Heart left ventricle (tissue), 16 donors: ENCODE measurements at regions of chr6 and their contacts with region 1.

Region 1: GRCh38 chr6:33008944-33009861 is at the start of gene HLA-DOA:
- DNase-seq: peak in 1 of 5 donors; percentile 22
- ATAC-seq: peak; percentile 26 to 74 (median 67)
- H3K4me3 ChIP-seq: peak within 1 kb of the TSS in 9 of 12 donors; percentile 12 to 67 (median 44)
- H3K27ac ChIP-seq: peak within 1 kb of the TSS in 3 of 12 donors; percentile 7 to 83 (median 71)
- H3K4me1 ChIP-seq: peaks cover 0 to 15% (median 0%) of the 10 kb centered on the region in 12 donors
- H3K27me3 ChIP-seq: peaks cover 0 to 21% (median 4%) of the 10 kb centered on the region in 9 donors
- CTCF ChIP-seq: no peak
- POLR2A ChIP-seq: no peak
- total RNA-seq, gene HLA-DOA: 0.44 to 32.4 (median 1.5) TPM

Region 2: DNA sequence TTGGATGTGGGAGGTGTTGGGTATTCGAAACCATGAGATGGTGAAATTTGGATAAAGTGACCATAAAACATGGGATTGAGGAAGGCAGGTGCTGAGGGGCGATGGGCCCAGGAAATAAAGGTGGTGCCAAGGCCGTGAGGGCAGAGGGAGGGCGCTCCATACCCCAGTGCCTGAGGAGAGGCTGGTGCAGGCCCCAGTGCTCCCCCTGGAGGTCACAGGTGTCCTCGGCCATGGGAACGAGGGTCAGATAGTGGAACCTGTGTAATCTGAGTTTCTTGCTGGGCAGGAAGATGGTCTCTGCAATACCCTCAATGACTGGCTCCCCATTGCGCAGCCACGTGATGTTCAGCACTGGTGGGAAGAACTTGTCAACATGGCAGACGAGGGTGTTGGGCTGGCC is 82.8 kb after region 1 on chr6:
- intact Hi-C with region 1: loop called in 3 of 10 experiments (anchors 2 to 5 kb)
- DNase-seq: peak in 1 of 5 donors; percentile 75
- ATAC-seq: peak in 3 of 4 donors; percentile 20 to 54 (median 54)
- H3K4me3 ChIP-seq: no peak overlapping the region
- H3K27ac ChIP-seq: no peak overlapping the region
- H3K4me1 ChIP-seq: peaks cover 0 to 6% (median 0%) of the 10 kb centered on the region in 12 donors
- H3K27me3 ChIP-seq: peaks cover 0 to 11% (median 0%) of the 10 kb centered on the region in 9 donors
- CTCF ChIP-seq: peak in 11 of 12 donors; percentile 18 to 64 (median 53)
- POLR2A ChIP-seq: no peak

Region 3: GRCh38 chr6:33241968-33242367 is 232.8 kb after region 1 on chr6:
- intact Hi-C with region 1: loop called in 4 of 10 experiments (anchors 5 to 10 kb)
- DNase-seq: no peak
- ATAC-seq: no peak
- H3K4me3 ChIP-seq: no peak overlapping the region
- H3K27ac ChIP-seq: no peak overlapping the region
- H3K4me1 ChIP-seq: no peaks in the 10 kb centered on the region
- H3K27me3 ChIP-seq: peaks cover 0 to 18% (median 0%) of the 10 kb centered on the region in 9 donors
- CTCF ChIP-seq: no peak
- POLR2A ChIP-seq: no peak